Breast epithelium (tissue), 4 donors: ENCODE measurements at regions of chr10 and their contacts with region 1.

Region 1: DNA sequence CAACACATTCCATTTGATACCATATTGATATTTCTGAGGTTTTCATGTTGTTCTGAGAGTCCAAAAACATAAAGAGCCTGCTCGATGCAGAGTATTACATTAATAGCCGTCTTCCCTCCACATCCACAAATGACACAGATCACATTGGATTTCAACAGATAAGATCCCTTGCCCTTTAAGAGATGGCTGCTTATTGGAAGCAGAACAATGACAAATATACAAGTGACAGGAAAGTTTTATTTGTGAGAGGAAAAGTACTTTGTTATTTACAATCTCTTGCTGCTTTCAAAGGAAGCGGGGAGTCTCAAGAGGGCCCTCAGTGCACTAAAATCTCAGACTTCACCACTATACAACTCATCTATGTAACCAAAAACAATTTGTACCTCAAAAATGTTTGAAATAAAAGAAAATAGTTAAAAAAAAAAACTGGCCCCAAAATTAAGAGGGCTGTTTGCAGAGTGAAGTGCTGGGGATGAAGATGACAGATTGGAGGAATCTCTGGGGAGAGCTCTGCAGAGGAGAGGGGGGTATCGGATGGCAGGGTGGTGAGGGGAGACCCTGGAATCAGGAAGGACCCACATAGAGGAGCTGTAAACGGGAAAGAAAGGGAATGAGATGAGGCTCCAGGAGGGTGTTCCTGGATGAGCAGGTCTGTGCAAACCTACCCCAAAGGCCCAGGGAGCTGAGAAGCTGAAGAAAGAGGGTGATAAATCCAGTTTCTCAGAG is 42.5 kb upstream of the ZNF438 start:
- DNase-seq: no peak
- H3K4me3 ChIP-seq: no peak overlapping the region
- H3K27ac ChIP-seq: no peak overlapping the region
- H3K4me1 ChIP-seq: no peaks in the 10 kb centered on the region
- H3K27me3 ChIP-seq: no peaks in the 10 kb centered on the region
- CTCF ChIP-seq: no peak
- POLR2A ChIP-seq: no peak

Region 2: GRCh38 chr10:30359373-30360206 is 714.6 kb before region 1 on chr10:
- intact Hi-C with region 1: no loop called
- DNase-seq: no peak
- H3K4me3 ChIP-seq: no peak overlapping the region
- H3K27ac ChIP-seq: no peak overlapping the region
- H3K4me1 ChIP-seq: no peaks in the 10 kb centered on the region
- H3K27me3 ChIP-seq: no peaks in the 10 kb centered on the region
- CTCF ChIP-seq: peak in 2 of 3 donors; percentile 33 to 49
- POLR2A ChIP-seq: no peak

Region 3: DNA sequence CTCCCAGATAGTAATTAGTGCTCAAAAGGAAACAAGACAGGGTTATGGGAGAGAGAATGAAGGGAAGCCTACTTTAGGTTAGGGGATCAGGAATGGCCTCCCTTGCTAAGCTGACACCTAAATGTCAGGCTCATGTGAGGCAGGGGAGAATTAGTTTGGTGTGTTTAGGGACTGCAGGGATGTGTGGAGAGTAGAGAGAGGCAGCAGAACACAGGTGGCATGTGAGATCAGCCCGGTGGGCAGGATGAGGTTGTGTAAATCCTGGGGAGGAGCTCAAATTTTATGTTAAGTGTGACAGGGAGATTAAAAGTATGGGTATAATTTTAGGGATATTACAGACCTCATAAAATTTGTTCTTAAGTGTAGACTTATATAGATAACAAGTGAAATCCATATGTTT is 13.7 kb after region 1 on chr10:
- intact Hi-C with region 1: loop called (anchors 1 kb)
- DNase-seq: no peak
- H3K4me3 ChIP-seq: no peak overlapping the region
- H3K27ac ChIP-seq: no peak overlapping the region
- H3K4me1 ChIP-seq: no peaks in the 10 kb centered on the region
- H3K27me3 ChIP-seq: no peaks in the 10 kb centered on the region
- CTCF ChIP-seq: no peak
- POLR2A ChIP-seq: no peak

Region 4: GRCh38 chr10:31171402-31172083 is 97.4 kb after region 1 on chr10:
- intact Hi-C with region 1: no loop called
- DNase-seq: no peak
- H3K4me3 ChIP-seq: no peak overlapping the region
- H3K27ac ChIP-seq: no peak overlapping the region
- H3K4me1 ChIP-seq: no peaks in the 10 kb centered on the region
- H3K27me3 ChIP-seq: no peaks in the 10 kb centered on the region
- CTCF ChIP-seq: no peak
- POLR2A ChIP-seq: no peak